KBM-7 (cell line): ENCODE measurements at regions of chr21 and their contacts with region 1.

Region 1: DNA sequence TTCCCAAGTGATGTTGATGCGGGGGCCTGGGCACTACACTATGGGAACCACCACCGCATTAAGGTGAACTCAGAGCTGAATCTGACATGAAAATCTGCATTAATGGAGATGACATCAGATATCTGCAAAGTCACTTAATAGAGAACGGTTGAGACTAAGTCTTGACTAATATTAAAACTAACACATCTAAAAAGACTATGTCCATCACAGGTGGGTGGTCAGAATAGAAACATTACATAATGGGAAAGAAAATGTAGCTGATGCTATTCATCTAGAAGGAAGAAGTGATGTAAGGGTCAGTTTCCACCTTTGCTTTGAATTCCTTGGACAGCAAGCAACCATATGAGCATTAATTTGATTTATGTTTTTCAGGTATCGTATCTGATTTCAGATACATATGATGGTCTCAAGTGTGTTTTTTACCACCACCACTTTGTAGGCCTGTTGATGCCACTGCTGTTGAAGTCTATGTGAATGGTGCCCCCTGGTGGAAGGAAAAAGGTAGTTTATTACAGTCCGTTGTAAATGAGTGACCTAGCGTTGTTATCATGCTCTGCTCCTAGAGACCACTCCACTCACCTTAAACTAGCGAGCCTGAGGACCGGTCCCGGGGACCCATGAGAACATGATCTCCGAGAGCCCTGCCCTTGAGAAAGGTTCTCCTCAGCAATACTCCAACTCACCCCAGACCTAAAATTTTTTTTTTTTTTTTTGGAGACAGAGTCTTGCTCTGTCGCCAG is 73.5 kb downstream of the BACH1 start:
- DNase-seq: peak; percentile 77

Region 2: GRCh38 chr21:29091032-29091431 is 281.2 kb before region 1 on chr21:
- in situ Hi-C with region 1: loop called (anchors 10 kb)
- DNase-seq: no peak

Region 3: DNA sequence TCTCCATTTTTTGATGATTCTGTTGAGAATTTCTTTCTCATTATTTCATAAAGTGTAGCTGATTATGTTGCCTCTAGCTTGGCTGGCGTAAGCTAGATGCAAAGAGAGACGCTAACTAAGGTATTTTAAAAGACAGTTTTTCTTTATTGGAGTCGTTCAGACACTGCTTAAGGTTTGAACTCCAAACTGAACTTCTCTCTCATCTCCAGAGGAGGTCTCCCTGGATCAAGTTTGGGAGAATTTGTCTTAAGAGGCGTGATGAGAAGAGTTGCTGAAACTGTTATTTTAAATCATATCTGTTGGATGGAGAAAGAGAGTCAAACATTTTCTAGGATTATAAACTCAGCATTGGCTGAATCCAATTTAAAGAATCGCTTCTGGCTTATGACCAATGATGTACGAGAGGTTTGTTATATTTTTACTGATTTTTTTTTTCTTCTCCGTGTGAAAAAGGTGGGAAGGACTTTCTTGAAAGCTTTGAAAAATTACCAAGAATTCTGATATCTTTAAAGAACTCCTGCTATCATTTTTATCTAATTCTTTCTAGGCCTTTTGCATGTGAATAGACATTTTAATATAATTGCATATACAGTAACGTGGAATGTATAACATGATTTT is 207.8 kb before region 1 on chr21:
- in situ Hi-C with region 1: loop called (anchors 25 kb)
- DNase-seq: peak; percentile 65

Region 4: DNA sequence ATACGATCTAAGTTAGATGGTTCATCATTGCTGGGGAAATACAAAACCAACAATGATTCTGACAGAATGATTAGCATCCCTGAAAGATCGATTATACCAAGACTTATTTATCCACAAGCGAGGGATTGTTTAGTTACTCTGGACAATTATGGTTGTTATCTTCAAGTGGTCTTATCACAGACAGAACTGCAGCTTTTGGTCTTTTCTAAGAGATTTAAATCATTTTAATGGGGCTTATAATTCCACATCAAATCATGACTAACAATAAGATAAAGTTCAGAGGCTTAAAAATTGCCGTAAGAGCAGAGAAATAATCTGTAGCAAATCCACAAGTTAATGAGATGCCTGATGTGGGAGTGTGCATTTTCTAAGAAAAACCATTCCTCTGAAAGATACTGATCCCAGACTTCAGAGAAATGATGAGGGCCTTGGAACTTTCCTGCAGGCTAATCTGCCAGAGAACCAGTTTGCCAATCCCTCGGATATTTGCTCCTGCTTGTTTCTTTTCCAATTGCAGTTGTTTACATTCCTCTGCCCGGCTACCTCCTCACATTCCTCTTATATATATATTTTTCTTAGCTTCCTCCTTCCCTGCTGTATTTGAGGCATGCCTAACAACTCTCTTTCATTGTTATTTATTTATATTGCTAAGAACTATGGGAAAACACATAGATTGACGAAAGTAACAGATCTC is 61.3 kb after region 1 on chr21:
- in situ Hi-C with region 1: no loop called
- DNase-seq: no peak

Region 5: GRCh38 chr21:29462479-29462878 is 90.2 kb after region 1 on chr21:
- in situ Hi-C with region 1: no loop called
- DNase-seq: no peak